Lower leg skin (tissue), 4 donors: ENCODE measurements at regions of chr7 and their contacts with region 1.

Region 1: DNA sequence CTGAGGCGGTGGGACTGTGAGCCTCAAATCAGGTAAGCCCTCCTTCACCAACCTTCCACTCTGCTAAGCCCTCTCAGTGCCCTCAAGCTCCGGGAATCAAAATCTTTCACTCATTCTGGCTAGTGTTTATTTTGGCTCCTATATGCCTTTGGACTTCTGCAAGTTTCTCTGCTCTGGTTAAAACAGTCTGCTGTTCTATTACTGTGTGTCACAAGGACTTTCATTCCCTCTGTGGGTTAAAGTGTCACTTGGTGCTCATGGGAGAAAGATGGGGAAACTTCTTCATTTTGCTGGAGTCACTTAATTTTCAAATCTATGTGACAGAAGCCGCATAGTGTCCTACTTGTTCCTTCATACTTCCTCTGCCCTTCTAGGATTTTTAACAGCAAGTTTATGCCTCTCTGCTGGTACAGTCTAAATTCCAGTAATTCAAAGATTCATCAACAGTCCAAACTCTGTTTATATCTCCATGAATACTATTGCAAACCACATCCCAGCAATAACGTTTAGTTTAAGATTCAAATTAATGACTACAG is 61.3 kb downstream of the CD36 start:
- DNase-seq: no peak
- H3K4me3 ChIP-seq: no peak overlapping the region
- CTCF ChIP-seq: no peak
- POLR2A ChIP-seq: no peak

Region 2: GRCh38 chr7:80552304-80552703 is 147.5 kb before region 1 on chr7:
- intact Hi-C with region 1: no loop called
- DNase-seq: no peak
- H3K4me3 ChIP-seq: no peak overlapping the region
- CTCF ChIP-seq: no peak
- POLR2A ChIP-seq: no peak

Region 3: GRCh38 chr7:81457852-81458522 is 758.2 kb after region 1 on chr7:
- intact Hi-C with region 1: loop called (anchors 5 kb)
- DNase-seq: no peak
- H3K4me3 ChIP-seq: no peak overlapping the region
- CTCF ChIP-seq: no peak
- POLR2A ChIP-seq: no peak